Activated CD8-positive, alpha-beta memory T cell treated with anti-CD3 and anti-CD28 coated beads, Interleukin-2, amount 10 ng/mL, durations not matched to agents 7 days and 5 days (primary cell): ENCODE measurements at regions of chr5 and their contacts with region 1.

Region 1: DNA sequence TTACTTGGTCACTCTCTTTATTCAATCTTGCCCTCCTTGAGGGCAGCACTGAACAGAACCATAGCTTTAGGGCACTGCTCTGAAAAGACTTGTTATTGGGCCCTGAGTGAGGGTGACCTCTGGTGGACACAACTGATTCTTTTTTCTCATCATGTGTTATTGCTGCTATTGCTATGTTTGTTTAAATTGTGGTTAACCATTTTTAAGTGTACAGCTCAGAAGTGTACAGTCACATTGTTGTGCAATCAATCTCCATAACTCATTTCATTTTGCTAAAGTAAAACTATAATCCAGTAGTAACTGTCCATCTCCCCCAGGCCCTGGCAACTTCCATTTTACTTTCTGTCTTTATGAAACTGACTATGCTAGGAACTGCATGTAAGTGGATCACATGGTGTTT is 351.1 kb upstream of the RIOK2 start:
- DNase-seq: no peak
- ATAC-seq: no peak
- H3K4me3 Mint-ChIP-seq: no peak overlapping the region
- H3K27ac Mint-ChIP-seq: no peak overlapping the region
- H3K4me1 Mint-ChIP-seq: no peaks in the 10 kb centered on the region
- H3K27me3 Mint-ChIP-seq: no peaks in the 10 kb centered on the region

Region 2: DNA sequence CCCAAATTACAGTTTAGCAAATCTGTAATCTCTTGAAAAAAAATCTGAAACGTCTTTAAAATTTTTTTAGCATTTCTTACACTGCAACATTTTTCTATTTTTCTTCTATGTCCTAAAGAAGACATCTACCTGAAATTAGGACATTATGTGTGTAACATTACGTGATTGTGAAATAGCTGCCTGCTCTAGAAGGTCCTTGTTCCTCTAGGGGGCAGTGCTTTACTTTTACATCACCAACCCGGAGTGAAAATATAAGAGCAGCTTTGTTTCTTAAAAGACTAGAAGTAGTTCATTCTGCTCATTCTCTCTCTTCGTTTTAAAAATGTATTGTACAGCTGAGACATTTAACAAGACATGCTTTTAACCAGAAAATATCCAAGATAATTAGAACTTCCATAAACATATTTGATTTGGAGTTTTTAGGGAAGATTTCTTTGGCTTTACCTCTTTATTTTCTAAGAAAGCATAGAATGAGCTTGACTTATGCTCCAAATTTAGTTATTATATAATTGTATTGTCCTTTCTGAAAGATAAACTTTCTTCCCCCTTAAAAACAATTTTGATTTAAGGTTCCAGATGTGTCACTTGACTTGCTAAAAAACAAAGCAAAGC is 303.0 kb before region 1 on chr5:
- CTCF ChIA-PET with region 1: interaction called, 11 read pairs
- DNase-seq: no peak
- ATAC-seq: peak; percentile 72
- H3K4me3 Mint-ChIP-seq: no peak overlapping the region
- H3K27ac Mint-ChIP-seq: no peak overlapping the region
- H3K4me1 Mint-ChIP-seq: peaks cover 1% of the 10 kb centered on the region
- H3K27me3 Mint-ChIP-seq: peaks cover 5% of the 10 kb centered on the region

Region 3: DNA sequence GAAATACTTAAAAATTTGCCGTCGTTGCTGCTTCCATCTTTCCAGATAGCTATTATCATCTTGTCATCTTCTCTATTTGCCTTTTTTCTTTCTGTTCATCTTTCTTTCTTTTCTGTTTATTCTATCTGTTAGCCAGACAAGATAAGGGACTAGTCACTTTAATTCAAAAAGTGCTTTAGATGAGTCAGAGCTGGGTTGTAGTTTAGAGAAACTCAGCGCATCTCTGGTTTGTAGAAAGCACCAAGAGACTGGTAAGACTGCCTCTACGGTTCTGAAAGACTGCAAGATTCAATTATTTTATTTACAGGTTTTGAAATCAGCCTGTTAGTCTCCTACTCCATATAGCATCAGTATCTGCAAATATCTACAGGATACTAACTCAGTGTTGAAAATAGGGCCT is 211.7 kb after region 1 on chr5:
- CTCF ChIA-PET with region 1: no interaction called
- DNase-seq: no peak
- ATAC-seq: no peak
- H3K4me3 Mint-ChIP-seq: no peak overlapping the region
- H3K27ac Mint-ChIP-seq: no peak overlapping the region
- H3K4me1 Mint-ChIP-seq: no peaks in the 10 kb centered on the region
- H3K27me3 Mint-ChIP-seq: no peaks in the 10 kb centered on the region